ENCODE measurements at regions of chr4 and their contacts with region 1.

Region 1: GRCh38 chr4:123396307-123397143 is at the start of gene SPRY1:
- DNase-seq: peak; percentile 91
- ATAC-seq: peak; percentile 85
- H3K4me3 ChIP-seq: peak within 1 kb of the TSS; percentile 77 to 81
- H3K27ac ChIP-seq: peak within 1 kb of the TSS; percentile 53 to 87
- H3K4me1 ChIP-seq: no peaks in the 10 kb centered on the region
- H3K27me3 ChIP-seq: no peaks in the 10 kb centered on the region
- total RNA-seq, gene SPRY1: 209 to 210 TPM

Region 2: GRCh38 chr4:123102897-123103471 is 293.5 kb before region 1 on chr4:
- intact Hi-C with region 1: loop called in 1 of 2 experiments (anchors 10 kb)
- DNase-seq: no peak
- ATAC-seq: peak; percentile 74
- H3K4me3 ChIP-seq: no peak overlapping the region
- H3K27ac ChIP-seq: no peak overlapping the region
- H3K4me1 ChIP-seq: no peaks in the 10 kb centered on the region
- H3K27me3 ChIP-seq: no peaks in the 10 kb centered on the region

Region 3: GRCh38 chr4:123232439-123232838 is 164.1 kb before region 1 on chr4:
- intact Hi-C with region 1: loop called in 1 of 2 experiments (anchors 10 kb)
- DNase-seq: no peak
- ATAC-seq: no peak
- H3K4me3 ChIP-seq: no peak overlapping the region
- H3K27ac ChIP-seq: peak overlapping the region in 1 of 2 donors; percentile 4
- H3K4me1 ChIP-seq: peaks cover 1 to 9% of the 10 kb centered on the region in 2 donors
- H3K27me3 ChIP-seq: no peaks in the 10 kb centered on the region

Region 4: GRCh38 chr4:123555233-123555806 is 158.8 kb after region 1 on chr4:
- intact Hi-C with region 1: loop called (anchors 2 to 5 kb)
- DNase-seq: peak; percentile 92 to 93
- ATAC-seq: peak; percentile 92
- H3K4me3 ChIP-seq: no peak overlapping the region
- H3K27ac ChIP-seq: peak overlapping the region; percentile 83 to 97
- H3K4me1 ChIP-seq: peaks cover 2 to 5% of the 10 kb centered on the region in 2 donors
- H3K27me3 ChIP-seq: no peaks in the 10 kb centered on the region

Region 5: GRCh38 chr4:123649645-123650391 is 253.3 kb after region 1 on chr4:
- intact Hi-C with region 1: loop called in 1 of 2 experiments (anchors 5 kb)
- DNase-seq: no peak
- ATAC-seq: peak; percentile 75
- H3K4me3 ChIP-seq: peak overlapping the region in 1 of 2 donors; percentile 6
- H3K27ac ChIP-seq: peak overlapping the region; percentile 88 to 97
- H3K4me1 ChIP-seq: peaks cover 0 to 3% of the 10 kb centered on the region in 2 donors
- H3K27me3 ChIP-seq: no peaks in the 10 kb centered on the region

Measured in aorta (tissue), 5 donors.